ENCODE measurements at regions of chr9 and their contacts with region 1.

Region 1: DNA sequence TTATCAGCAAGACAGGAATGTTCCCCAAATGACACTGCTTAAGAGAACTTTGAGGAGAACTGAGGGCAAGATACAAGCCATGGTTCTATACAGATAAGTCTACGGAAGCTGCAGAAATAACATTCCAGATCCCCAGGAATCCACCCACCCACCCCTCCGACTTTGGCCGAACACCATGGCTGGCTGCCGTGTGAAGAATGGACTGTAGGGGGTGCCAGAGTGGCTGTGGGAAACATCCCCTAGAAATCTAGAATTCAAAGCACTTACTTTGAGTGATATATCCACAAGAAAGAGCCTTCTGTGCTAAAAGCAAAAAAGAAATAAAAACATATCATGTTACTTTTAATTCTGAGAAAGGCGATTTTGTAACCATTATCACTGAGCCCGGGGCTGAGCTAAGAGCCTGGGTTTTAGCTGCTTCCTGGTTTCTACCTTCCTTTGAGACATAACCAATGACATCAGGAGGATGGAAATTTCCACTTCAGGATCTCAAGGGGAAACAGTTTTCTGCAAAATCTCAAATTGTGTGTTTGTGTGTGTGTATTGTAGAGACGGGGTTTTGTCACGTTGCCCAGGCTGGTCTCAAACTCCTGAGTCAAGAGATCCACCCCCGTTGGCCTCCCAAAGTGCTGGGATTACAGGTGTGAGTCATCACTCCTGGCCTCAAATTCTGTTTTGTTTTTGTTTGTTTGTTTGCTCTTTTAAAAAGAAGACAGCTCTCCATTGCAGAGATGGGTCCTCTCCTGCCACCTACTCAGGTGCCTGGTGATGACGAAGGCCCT is 36.4 kb downstream of the GGTA1 start:
- DNase-seq: no peak
- H3K4me3 ChIP-seq: no peak overlapping the region
- H3K27ac ChIP-seq: peak overlapping the region in 2 of 4 donors; percentile 52 to 62
- H3K4me1 ChIP-seq: peaks cover 0 to 46% (median 7%) of the 10 kb centered on the region in 3 donors
- H3K27me3 ChIP-seq: no peaks in the 10 kb centered on the region
- CTCF ChIP-seq: peak; percentile 43 to 79 (median 63)
- POLR2A ChIP-seq: no peak

Region 2: DNA sequence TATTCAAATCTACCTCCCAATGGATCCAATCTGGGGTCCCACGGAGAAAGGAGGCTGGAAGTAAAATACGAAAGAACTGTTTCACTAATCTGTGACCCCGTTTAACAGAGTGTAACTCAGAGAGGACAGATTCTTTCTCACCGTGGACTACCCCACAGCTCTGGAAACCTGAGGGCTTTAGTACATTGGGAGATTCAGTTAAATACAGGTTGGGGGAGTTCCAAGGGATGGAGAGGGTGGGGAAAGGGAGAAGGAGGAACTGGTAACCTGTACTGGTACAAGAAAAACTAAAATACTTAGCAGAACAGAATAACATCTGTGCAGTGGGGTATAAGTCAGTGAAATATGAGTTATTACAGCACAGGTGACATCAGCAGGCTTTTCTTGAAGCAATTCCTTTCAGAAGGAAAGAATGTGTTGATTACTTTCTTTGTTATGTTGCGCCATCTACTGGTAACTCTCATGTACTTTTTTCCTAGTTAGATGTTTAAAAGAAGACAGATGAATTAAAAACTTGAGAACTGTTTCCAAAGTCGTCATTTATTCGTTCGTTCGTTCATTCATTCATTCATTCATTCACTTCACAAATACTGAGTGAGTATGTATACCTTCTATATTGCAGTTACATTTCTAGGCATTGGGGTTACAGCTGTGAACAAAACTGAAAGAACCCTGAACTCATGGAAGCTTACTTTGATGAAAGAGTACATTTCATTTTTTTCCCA is 63.2 kb before region 1 on chr9:
- intact Hi-C with region 1: no loop called
- DNase-seq: no peak
- H3K4me3 ChIP-seq: no peak overlapping the region
- H3K27ac ChIP-seq: peak overlapping the region in 3 of 4 donors; percentile 67 to 85 (median 79)
- H3K4me1 ChIP-seq: peaks cover 0 to 29% (median 0%) of the 10 kb centered on the region in 3 donors
- H3K27me3 ChIP-seq: no peaks in the 10 kb centered on the region
- CTCF ChIP-seq: peak; percentile 57 to 82 (median 80)
- POLR2A ChIP-seq: no peak

Region 3: GRCh38 chr9:121538246-121538645 is 75.0 kb after region 1 on chr9:
- intact Hi-C with region 1: loop called (anchors 10 kb)
- DNase-seq: no peak
- H3K4me3 ChIP-seq: no peak overlapping the region
- H3K27ac ChIP-seq: peak overlapping the region in 2 of 4 donors; percentile 50 to 64
- H3K4me1 ChIP-seq: peaks cover 10 to 35% (median 14%) of the 10 kb centered on the region in 3 donors
- H3K27me3 ChIP-seq: no peaks in the 10 kb centered on the region
- CTCF ChIP-seq: peak in 4 of 6 experiments; percentile 5 to 60 (median 23)
- POLR2A ChIP-seq: no peak

Region 4: DNA sequence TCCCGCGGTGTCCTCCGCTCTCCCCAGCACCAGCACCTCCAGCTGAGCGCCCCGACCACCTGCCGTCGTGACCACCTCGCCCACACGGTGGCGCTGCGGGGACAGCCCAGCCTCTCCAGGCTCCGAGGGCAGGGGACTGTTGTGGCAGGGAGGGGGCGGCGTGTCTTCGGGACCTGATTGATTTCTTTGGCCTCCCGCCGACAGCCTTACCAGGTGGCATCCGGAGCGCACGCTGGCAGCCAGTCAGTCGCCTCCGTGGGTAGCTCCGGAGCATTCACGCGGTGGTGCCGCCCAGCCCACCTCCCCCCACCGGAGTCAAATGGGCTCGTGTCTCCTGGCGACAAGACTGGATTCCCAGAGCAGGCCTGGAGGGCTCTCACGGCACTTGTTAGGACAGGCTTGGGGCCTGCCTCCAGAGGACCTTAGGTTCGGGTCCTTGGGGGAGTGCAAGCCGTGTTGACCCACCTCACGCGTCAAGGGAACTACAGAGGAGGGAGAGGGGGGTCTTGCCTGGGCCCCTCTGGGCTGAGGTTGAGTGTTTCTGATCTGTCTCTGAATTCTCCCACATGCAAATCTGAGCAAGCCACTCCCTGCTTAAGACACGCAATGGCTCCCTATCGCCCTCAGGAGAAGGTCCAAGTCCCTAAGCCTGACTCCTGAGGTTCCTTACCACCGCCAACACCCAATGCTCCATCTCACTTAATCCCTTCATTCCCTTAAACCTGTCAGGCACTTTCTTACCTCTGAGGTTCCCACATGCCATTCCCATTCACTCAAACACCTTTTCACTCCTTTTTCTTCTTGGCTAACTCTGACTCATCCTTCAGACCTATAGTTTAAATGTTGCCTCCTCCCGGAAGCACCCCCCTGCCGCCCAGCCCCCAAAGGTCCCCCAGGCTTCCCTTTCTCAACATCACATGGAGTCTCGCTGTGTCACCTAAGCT is 87.6 kb after region 1 on chr9:
- intact Hi-C with region 1: no loop called
- DNase-seq: no peak
- H3K4me3 ChIP-seq: peak overlapping the region; percentile 3 to 57 (median 34)
- H3K27ac ChIP-seq: peak overlapping the region in 3 of 4 donors; percentile 6 to 37 (median 7)
- H3K4me1 ChIP-seq: peaks cover 7 to 37% (median 15%) of the 10 kb centered on the region in 3 donors
- H3K27me3 ChIP-seq: no peaks in the 10 kb centered on the region
- CTCF ChIP-seq: peak; percentile 89 to 98 (median 96)
- POLR2A ChIP-seq: no peak

Measured in esophagus squamous epithelium (tissue), 5 donors.